Activated CD4-positive, alpha-beta memory T cell treated with anti-CD3 and anti-CD28 coated beads for 36 hours (primary cell): ENCODE measurements at regions of chr13 and their contacts with region 1.

Region 1: GRCh38 chr13:99386911-99387788 is 80.0 kb upstream of the GPR183 start:
- DNase-seq: peak; percentile 92
- H3K4me3 Mint-ChIP-seq: no peak overlapping the region
- H3K27ac Mint-ChIP-seq: peak overlapping the region; percentile 61
- H3K4me1 Mint-ChIP-seq: peaks cover 64% of the 10 kb centered on the region
- H3K27me3 Mint-ChIP-seq: no peaks in the 10 kb centered on the region

Region 2: DNA sequence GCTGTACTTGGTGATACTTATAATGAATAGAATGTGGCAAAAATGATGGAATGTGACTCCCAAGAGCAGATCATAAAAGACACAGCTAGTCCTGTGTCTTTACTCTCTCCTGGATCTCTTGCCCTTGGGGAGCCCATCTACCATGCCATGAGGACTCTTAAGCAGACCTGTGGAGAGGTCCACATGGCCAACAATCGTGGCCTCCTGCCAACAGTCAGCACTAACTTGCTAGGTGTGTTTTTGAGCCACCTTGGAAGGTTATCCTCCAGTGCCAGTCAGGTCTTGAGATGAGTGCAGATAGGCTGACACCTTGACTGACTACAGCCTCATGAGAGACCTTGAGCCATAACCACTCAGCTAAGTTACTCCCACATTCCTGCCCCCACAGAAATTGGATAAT is 57.7 kb before region 1 on chr13:
- CTCF ChIA-PET with region 1: interaction called, 11 read pairs
- POLR2A ChIA-PET with region 1: interaction called, 4 read pairs
- intact Hi-C with region 1: no loop called
- DNase-seq: no peak
- H3K4me3 Mint-ChIP-seq: no peak overlapping the region
- H3K27ac Mint-ChIP-seq: no peak overlapping the region
- H3K4me1 Mint-ChIP-seq: peaks cover 55% of the 10 kb centered on the region
- H3K27me3 Mint-ChIP-seq: no peaks in the 10 kb centered on the region

Region 3: DNA sequence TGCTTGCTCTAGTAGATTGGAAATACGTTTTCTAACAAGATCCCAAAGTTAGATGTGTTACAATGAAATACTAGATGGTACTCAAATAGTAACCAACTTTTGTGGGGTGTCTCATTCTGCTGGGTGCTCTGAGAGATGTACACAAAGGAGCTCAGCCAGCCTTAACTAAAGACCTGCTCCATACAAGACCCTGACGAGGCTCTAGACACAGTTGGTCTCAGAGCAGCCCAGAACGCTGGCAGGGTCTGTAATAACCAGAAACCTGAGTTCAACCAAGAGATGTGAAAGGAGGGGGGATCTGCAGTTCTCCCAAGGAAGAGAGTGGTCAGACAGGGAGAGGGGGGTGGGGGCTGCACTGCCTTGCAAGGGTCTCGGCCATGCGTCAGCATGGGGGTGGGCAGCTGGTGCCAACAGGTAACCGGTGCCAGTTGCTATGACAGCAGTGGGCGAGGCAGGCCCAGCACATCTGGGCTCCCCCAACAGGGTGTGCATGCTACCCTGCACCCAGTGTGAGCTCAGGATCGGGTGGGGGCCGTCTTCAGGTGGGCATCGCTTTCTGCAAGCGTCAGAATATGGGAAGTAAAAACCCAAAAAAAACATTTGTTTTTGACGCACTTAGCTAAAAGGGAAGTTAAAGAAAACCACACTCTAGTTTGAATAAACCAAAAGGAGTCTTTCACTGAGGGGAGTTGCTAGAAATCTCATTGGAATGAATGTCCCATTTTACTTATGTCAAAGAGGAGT is 12.0 kb before region 1 on chr13:
- CTCF ChIA-PET with region 1: interaction called, 25 read pairs
- POLR2A ChIA-PET with region 1: interaction called, 11 read pairs
- intact Hi-C with region 1: no loop called
- DNase-seq: peak; percentile 21
- H3K4me3 Mint-ChIP-seq: no peak overlapping the region
- H3K27ac Mint-ChIP-seq: no peak overlapping the region
- H3K4me1 Mint-ChIP-seq: peaks cover 76% of the 10 kb centered on the region
- H3K27me3 Mint-ChIP-seq: no peaks in the 10 kb centered on the region

Region 4: DNA sequence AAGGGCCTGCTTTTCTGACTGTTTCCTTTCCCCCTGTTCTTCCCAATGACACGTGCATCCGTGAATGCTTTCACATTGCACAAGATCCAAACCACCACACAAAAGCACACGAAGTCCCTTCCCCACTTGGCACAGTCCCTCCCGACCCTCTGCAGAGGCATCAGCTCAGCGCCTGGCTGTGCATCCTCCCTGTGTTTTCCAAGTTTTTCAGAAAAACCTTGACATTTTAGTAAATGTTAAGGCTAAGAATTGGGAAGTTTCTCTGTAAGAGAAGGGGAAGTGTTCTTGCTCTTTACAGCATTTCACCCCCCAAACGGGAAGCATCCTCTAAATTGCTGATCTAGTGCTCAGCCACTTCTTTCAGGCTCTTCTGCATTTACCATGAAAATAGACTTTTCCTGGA is 19.6 kb after region 1 on chr13:
- CTCF ChIA-PET with region 1: interaction called, 15 read pairs
- POLR2A ChIA-PET with region 1: no interaction called
- intact Hi-C with region 1: no loop called
- DNase-seq: no peak
- H3K4me3 Mint-ChIP-seq: no peak overlapping the region
- H3K27ac Mint-ChIP-seq: no peak overlapping the region
- H3K4me1 Mint-ChIP-seq: peaks cover 13% of the 10 kb centered on the region
- H3K27me3 Mint-ChIP-seq: no peaks in the 10 kb centered on the region